ENCODE measurements at regions of chr12 and their contacts with region 1.

Region 1: GRCh38 chr12:50504798-50505385 is at the start of gene DIP2B:
- DNase-seq: peak; percentile 99
- H3K4me3 Mint-ChIP-seq: peak within 1 kb of the TSS; percentile 99
- H3K27ac Mint-ChIP-seq: peak within 1 kb of the TSS; percentile 98
- H3K4me1 Mint-ChIP-seq: peaks cover 45% of the 10 kb centered on the region
- H3K27me3 Mint-ChIP-seq: no peaks in the 10 kb centered on the region
- total RNA-seq, gene DIP2B: 26.4 and 29.4 TPM in 2 replicates

Region 2: GRCh38 chr12:50533203-50533584 is 28.3 kb after region 1 on chr12:
- intact Hi-C with region 1: loop called (anchors 2 kb)
- DNase-seq: peak; percentile 69
- H3K4me3 Mint-ChIP-seq: no peak overlapping the region
- H3K27ac Mint-ChIP-seq: no peak overlapping the region
- H3K4me1 Mint-ChIP-seq: peaks cover 34% of the 10 kb centered on the region
- H3K27me3 Mint-ChIP-seq: no peaks in the 10 kb centered on the region

Region 3: DNA sequence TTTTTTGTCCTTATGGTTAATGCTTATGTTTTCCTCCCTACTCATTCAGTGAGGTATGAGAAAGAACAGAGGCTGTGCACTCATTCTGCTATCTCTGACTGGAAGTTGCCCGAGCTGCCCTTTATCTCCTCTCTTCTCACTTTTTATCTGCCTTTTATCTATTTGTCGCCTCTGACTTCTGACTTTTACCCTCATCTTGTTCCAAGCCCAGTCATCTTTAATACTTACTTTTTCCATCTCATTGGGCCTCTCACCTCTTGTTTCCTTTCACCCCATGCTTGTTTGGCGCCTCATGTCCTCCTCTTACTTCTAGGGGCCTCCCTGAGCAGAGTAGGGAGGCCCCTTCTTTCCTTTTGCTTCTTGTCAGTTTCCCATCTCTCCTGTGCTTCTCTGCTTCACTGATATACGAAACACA is 50.6 kb after region 1 on chr12:
- intact Hi-C with region 1: loop called (anchors 2 kb)
- DNase-seq: no peak
- H3K4me3 Mint-ChIP-seq: peak overlapping the region; percentile 59
- H3K27ac Mint-ChIP-seq: peak overlapping the region; percentile 91
- H3K4me1 Mint-ChIP-seq: peaks cover 18% of the 10 kb centered on the region
- H3K27me3 Mint-ChIP-seq: no peaks in the 10 kb centered on the region

Region 4: DNA sequence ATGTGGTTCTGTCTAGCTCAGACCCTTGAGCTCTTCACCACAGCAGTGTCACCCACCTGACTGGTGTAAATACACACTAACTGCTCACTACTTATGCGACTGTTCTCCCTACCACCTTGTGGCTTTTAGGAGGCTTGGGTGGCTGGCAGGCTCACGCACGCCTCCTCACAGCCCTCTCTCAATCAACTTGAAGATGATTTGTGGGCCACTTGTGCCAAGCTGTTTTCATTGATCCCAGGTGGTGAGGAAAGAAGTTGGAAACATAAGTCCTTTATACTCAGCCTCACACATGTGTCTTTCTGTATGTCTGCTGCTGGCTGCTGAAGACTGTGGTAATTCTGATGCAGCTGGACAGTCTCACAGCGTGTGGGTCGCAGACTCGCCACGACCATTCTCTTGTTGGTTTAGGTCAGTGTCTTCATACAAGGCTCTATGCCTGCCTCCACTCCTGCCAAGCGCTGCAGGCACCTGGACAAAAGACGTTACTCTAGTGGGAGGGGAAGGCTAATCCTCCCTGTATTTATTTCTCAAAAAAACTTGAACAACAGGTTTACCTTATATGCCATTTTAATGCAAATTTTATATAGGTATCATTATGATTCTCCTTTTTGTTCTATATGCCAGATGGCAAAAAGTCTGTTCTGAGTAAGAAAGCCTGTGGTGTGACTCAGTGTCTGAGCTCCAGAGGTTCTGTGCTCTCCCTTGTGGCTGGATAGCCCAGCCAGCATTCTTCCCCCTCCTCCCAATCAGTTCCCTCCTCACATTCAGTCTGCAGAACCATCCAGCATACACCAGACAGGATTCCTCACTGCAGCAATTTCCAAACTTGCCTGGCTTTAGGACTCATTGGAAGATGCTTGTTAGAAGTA is 115.5 kb after region 1 on chr12:
- intact Hi-C with region 1: loop called (anchors 5 kb)
- DNase-seq: no peak
- H3K4me3 Mint-ChIP-seq: no peak overlapping the region
- H3K27ac Mint-ChIP-seq: peak overlapping the region; percentile 72
- H3K4me1 Mint-ChIP-seq: peaks cover 34% of the 10 kb centered on the region
- H3K27me3 Mint-ChIP-seq: no peaks in the 10 kb centered on the region

Region 5: DNA sequence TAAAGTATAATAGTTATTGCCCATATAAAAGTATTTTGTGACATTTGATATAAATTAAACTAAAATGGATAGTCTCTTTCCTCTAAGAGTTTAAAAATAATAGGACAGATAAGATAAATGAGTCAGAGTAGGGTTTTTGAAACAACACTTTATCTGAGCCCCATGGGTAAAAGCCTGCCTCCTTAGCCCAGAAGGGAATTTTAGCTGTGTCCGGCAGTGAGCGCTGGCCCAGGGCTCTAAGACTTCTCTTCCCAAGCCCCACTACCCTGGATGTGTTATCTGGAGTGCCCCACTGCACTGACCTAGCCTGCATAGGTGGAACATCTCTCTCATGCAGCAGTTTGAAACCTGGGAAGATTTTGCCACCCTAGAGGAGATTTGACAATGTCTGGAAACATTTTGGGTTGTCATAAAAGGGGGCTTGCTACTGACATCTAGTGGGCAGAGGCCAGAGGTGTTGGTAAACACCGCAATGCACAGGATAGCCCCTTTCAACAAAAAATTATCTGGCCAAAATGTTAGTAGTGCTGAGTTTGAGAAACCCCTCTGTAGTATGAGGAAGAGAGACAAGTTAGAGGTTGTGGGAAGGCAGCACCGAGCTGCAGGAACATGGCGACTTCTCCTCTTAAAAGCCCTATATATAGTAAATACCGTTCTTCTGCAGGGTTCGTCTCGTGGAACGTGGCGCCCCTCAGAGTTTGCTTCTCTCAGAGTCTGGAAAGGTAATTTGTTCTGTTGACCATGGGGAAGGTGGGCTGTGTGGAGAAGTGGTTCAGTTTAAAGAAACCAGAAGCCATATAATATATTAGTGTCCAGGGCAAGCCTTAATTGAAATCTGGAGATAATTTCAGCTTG is 229.7 kb after region 1 on chr12:
- intact Hi-C with region 1: loop called (anchors 2 kb)
- DNase-seq: peak; percentile 71
- H3K4me3 Mint-ChIP-seq: no peak overlapping the region
- H3K27ac Mint-ChIP-seq: no peak overlapping the region
- H3K4me1 Mint-ChIP-seq: no peaks in the 10 kb centered on the region
- H3K27me3 Mint-ChIP-seq: no peaks in the 10 kb centered on the region

Measured in activated CD4-positive, alpha-beta T cell treated with anti-CD3 and anti-CD28 coated beads, Interleukin-2, amount 10 ng/mL, durations not matched to agents 24 days and 14 days (primary cell).